ENCODE measurements at regions of chr5 and their contacts with region 1.

Region 1: GRCh38 chr5:180470966-180471582 is 23.1 kb upstream of the CNOT6 start:
- DNase-seq: peak; percentile 50
- H3K4me3 ChIP-seq: no peak overlapping the region
- H3K27ac ChIP-seq: no peak overlapping the region
- H3K4me1 ChIP-seq: no peaks in the 10 kb centered on the region
- H3K27me3 ChIP-seq: peaks cover 0 to 2% of the 10 kb centered on the region in 2 experiments
- CTCF ChIP-seq: peak; percentile 86
- POLR2A ChIP-seq: no peak

Region 2: DNA sequence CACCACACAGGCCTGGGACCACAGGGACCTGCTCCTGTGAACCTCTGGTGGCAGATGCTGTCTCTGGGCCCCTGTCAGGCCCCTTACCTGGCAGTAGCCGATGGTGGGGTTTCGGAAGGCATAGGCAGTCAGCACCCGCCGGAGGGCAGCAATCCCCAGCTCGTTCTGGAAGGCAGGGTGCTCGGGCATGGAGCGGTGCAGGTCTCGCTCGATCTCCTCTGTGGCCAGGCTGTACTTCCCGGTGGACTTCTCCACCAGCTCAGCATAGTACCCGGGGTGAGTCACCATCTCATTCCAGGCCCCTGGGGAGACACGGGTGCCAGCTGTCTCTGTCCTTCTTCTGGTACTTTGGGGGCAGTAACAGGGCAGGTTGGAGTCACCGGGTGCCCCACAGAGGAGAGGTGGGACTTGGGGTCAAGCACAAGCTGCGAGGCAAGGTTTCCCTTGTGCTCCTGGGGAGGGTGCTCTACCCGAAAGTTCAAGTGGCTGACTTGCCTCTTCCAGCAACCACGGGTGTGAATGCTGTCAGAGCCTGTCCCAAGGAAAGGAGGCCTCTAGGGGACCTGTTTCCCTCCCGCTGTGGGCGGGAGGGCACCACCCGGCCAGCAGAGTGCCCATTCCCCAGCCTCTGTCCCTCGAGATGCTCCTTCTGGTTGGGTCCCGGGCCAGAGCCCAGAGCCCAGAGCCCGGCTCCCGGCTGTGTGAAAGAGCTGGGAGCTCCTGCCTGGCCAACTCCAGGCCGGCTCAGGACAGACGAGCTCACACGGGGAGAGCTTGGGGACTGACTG is 592.7 kb before region 1 on chr5:
- CTCF ChIA-PET with region 1: no interaction called
- POLR2A ChIA-PET with region 1: no interaction called
- dilution Hi-C with region 1: no loop called
- intact Hi-C with region 1: no loop called
- DNase-seq: no peak
- H3K4me3 ChIP-seq: no peak overlapping the region
- H3K27ac ChIP-seq: no peak overlapping the region
- H3K4me1 ChIP-seq: no peaks in the 10 kb centered on the region
- H3K27me3 ChIP-seq: no peaks in the 10 kb centered on the region
- CTCF ChIP-seq: no peak
- POLR2A ChIP-seq: no peak

Region 3: GRCh38 chr5:180126726-180127681 is 344.1 kb before region 1 on chr5:
- CTCF ChIA-PET with region 1: interaction called, 5 read pairs
- POLR2A ChIA-PET with region 1: no interaction called
- dilution Hi-C with region 1: no loop called
- intact Hi-C with region 1: loop called (anchors 1 kb)
- DNase-seq: no peak
- H3K4me3 ChIP-seq: no peak overlapping the region
- H3K27ac ChIP-seq: no peak overlapping the region
- H3K4me1 ChIP-seq: no peaks in the 10 kb centered on the region
- H3K27me3 ChIP-seq: peaks cover 0 to 2% of the 10 kb centered on the region in 2 experiments
- CTCF ChIP-seq: peak; percentile 70 to 84
- POLR2A ChIP-seq: no peak

Region 4: GRCh38 chr5:180201051-180201987 is 269.8 kb before region 1 on chr5:
- CTCF ChIA-PET with region 1: interaction called, 31 read pairs
- POLR2A ChIA-PET with region 1: no interaction called
- dilution Hi-C with region 1: no loop called
- intact Hi-C with region 1: loop called (anchors 1 kb)
- DNase-seq: peak; percentile 40
- H3K4me3 ChIP-seq: no peak overlapping the region
- H3K27ac ChIP-seq: no peak overlapping the region
- H3K4me1 ChIP-seq: no peaks in the 10 kb centered on the region
- H3K27me3 ChIP-seq: no peaks in the 10 kb centered on the region
- CTCF ChIP-seq: peak; percentile 26 to 35
- POLR2A ChIP-seq: no peak

Region 5: GRCh38 chr5:180209137-180209581 is 261.9 kb before region 1 on chr5 and contains the start of gene RASGEF1C:
- CTCF ChIA-PET with region 1: interaction called, 14 read pairs
- POLR2A ChIA-PET with region 1: no interaction called
- dilution Hi-C with region 1: no loop called
- intact Hi-C with region 1: no loop called
- DNase-seq: peak; percentile 40
- H3K4me3 ChIP-seq: peak within 1 kb of the TSS in 1 of 3 experiments; percentile 27
- H3K27ac ChIP-seq: no peak within 1 kb of the TSS
- H3K4me1 ChIP-seq: peaks cover 3% of the 10 kb centered on the region
- H3K27me3 ChIP-seq: peaks cover 10 to 21% of the 10 kb centered on the region in 2 experiments
- CTCF ChIP-seq: peak; percentile 36 to 46
- POLR2A ChIP-seq: no peak
- total RNA-seq, gene RASGEF1C: not detected in 2 replicates

Region 6: DNA sequence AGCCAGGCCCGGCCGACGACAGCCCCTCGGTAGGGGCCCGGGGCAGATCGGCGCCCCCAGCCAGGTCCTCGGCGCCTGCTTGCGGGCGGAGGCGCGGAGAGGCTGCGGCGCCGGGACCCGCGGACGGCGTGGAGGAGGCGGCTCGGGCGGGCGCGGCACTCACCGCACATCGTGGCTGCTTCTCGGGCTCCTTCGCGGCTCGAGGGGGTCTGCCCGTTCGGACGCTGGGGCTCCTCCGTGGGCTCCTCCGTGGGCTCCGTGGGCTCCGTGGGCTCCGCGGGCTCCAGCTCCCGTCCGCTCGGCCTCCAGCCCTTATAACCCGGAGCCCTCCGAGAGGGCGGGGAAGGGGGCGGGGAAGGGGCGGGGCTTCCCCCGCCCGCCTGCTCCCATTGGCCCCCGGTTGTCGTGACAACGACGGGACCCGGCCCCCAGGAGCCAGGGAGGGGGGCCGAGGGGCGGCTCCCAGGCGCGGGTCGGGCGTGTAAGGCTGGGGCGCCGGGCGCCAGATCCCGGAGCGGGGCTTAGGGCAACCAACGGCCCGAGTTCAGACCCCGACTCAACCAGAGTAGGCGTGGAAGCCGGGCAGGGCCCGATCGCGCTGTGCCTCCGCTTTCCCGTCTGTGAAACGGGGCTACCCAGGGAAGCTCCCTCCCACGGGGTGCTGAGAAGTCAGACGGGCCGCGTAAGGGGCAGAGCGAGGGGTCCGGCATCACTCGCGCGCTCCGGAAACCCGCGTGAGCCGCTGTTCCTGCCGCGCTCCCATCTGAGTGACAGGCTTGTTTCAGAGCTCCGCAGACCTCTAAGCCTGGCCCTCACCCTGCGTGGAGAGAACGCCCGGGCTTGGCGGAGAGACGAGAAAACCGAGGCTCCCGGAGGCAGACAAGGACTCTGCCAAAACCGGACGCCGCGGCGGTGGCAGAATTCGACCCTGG is 117.8 kb before region 1 on chr5 and contains the start of gene GFPT2:
- CTCF ChIA-PET with region 1: no interaction called
- POLR2A ChIA-PET with region 1: no interaction called
- dilution Hi-C with region 1: no loop called
- intact Hi-C with region 1: loop called (anchors 5 kb)
- DNase-seq: peak; percentile 65
- H3K4me3 ChIP-seq: peak within 1 kb of the TSS; percentile 56 to 74 (median 70)
- H3K27ac ChIP-seq: peak within 1 kb of the TSS; percentile 34
- H3K4me1 ChIP-seq: peaks cover 8% of the 10 kb centered on the region
- H3K27me3 ChIP-seq: peaks cover 7 to 30% of the 10 kb centered on the region in 2 experiments
- CTCF ChIP-seq: no peak
- POLR2A ChIP-seq: no peak
- total RNA-seq, gene GFPT2: 4.5 and 5.5 TPM in 2 replicates

Region 7: DNA sequence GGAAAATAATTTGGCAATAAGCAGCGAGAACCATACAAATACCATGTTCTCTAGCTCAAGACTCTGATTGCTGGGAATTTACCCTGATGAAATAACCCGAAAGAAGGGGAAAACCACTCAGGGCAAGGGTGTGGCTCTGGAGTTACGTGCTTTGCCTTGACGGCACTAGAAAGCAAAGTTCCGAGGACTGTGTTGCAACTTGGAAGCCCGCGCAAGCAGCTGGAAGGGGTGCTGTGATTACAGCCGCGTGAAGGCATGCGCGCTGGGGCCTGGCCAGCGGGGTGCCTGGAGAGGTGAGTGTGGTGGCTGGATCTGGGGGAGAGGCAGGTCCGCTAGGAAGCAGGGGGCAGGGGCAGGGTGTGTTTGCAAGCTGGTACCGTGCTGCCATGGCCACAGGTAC is 29.5 kb before region 1 on chr5:
- CTCF ChIA-PET with region 1: no interaction called
- POLR2A ChIA-PET with region 1: no interaction called
- dilution Hi-C with region 1: no loop called
- intact Hi-C with region 1: no loop called
- DNase-seq: no peak
- H3K4me3 ChIP-seq: no peak overlapping the region
- H3K27ac ChIP-seq: no peak overlapping the region
- H3K4me1 ChIP-seq: no peaks in the 10 kb centered on the region
- H3K27me3 ChIP-seq: no peaks in the 10 kb centered on the region
- CTCF ChIP-seq: no peak
- POLR2A ChIP-seq: no peak